Spleen (tissue), 13 donors: ENCODE measurements at regions of chr5 and their contacts with region 1.

Region 1: GRCh38 chr5:32076699-32077695 is 97.1 kb downstream of the GOLPH3 start:
- DNase-seq: no peak
- H3K4me3 ChIP-seq: no peak overlapping the region
- H3K27ac ChIP-seq: no peak overlapping the region
- H3K4me1 ChIP-seq: no peaks in the 10 kb centered on the region
- H3K27me3 ChIP-seq: no peaks in the 10 kb centered on the region
- CTCF ChIP-seq: peak in 9 of 11 experiments; percentile 19 to 60 (median 44)
- POLR2A ChIP-seq: no peak

Region 2: DNA sequence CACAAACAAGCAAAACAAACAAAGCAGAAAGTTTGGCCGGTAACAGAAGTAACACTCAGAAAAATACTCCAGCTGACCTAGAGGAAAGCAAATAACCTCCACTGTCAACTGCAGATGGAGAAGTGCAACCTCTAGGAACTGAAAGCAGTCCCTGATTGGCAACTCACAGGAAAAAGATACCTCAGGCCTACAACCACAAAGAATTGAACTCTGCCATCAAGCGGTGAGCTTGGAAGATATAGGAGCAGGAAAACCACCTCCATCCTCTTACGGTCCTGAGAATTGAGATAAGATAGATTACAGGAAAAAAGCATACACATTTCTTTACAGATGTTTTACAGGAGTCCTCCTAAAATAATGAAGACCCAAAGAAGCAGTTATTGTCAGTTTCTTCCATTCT is 253.5 kb before region 1 on chr5:
- intact Hi-C with region 1: loop called (anchors 5 kb)
- DNase-seq: no peak
- H3K4me3 ChIP-seq: no peak overlapping the region
- H3K27ac ChIP-seq: no peak overlapping the region
- H3K4me1 ChIP-seq: peaks cover 0 to 10% (median 0%) of the 10 kb centered on the region in 6 donors
- H3K27me3 ChIP-seq: peaks cover 0 to 31% (median 0%) of the 10 kb centered on the region in 7 donors
- CTCF ChIP-seq: no peak
- POLR2A ChIP-seq: no peak

Region 3: DNA sequence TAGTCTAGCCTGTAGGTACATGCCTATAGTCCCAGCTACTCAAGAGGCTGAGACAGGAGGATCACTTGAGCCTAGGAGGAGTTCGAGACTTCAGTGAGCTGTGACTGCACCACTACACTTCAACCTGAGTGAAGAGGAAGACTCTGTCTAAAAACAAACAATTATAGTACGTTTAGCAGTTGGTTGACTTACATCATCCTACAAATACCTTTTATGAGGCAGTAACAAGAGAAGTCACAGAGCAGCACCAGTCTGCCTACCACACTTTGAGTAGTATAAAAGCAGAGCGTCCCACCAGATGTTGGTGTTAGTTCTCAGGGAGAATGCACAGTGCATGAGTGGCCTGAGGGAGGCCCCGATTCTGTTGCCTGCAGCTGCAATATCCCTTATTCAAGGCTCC is 351.4 kb after region 1 on chr5:
- intact Hi-C with region 1: no loop called
- DNase-seq: no peak
- H3K4me3 ChIP-seq: no peak overlapping the region
- H3K27ac ChIP-seq: no peak overlapping the region
- H3K4me1 ChIP-seq: peaks cover 4 to 56% (median 22%) of the 10 kb centered on the region in 6 donors
- H3K27me3 ChIP-seq: no peaks in the 10 kb centered on the region
- CTCF ChIP-seq: no peak
- POLR2A ChIP-seq: no peak